ENCODE measurements at regions of chr5 and their contacts with region 1.

Region 1: DNA sequence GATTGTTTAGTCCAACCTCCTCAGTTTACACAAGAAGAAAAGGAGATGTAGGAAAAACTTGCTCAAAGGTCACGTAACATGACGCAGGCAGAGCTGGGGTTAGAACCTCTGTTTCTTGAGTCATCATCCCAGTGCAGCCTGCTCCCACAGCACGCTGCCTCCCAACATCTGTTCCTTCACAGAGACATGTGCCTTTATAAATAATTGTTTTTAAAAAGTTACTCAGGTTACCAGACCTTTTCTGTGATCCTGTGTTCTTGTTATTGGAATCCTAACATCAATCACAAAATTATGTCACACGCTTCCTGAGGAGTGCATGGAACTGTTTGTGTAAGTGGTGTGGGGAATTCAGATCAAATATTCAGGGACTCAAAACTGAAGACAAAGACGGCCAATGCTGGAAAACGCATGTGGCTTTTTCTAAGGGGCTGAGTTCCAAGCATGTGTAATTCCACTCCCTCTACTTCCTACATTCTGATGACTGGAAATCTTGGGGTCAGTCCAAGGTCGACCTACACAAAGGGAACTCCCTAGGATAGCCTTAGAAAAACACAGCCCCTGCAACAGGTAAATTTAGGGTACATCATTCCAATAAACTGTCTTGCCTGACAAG is 184.3 kb downstream of the TSSK1B start:
- DNase-seq: peak in 1 of 2 donors; percentile 73
- ATAC-seq: peak; percentile 53 to 84 (median 76)
- H3K4me3 ChIP-seq: no peak overlapping the region
- H3K27ac ChIP-seq: peak overlapping the region in 9 of 10 donors; percentile 53 to 83 (median 68)
- H3K4me1 ChIP-seq: peaks cover 15 to 83% (median 59%) of the 10 kb centered on the region in 9 donors
- H3K27me3 ChIP-seq: no peaks in the 10 kb centered on the region
- CTCF ChIP-seq: no peak

Region 2: GRCh38 chr5:112983363-112983762 is 267.1 kb before region 1 on chr5:
- intact Hi-C with region 1: loop called in 1 of 10 experiments (anchors 5 kb)
- DNase-seq: no peak
- ATAC-seq: no peak
- H3K4me3 ChIP-seq: no peak overlapping the region
- H3K27ac ChIP-seq: no peak overlapping the region
- H3K4me1 ChIP-seq: peaks cover 0 to 50% (median 36%) of the 10 kb centered on the region in 9 donors
- H3K27me3 ChIP-seq: no peaks in the 10 kb centered on the region
- CTCF ChIP-seq: no peak

Region 3: GRCh38 chr5:113357696-113358476 is 107.4 kb after region 1 on chr5:
- intact Hi-C with region 1: no loop called
- DNase-seq: no peak
- ATAC-seq: peak in 2 of 8 donors; percentile 35 to 65
- H3K4me3 ChIP-seq: no peak overlapping the region
- H3K27ac ChIP-seq: no peak overlapping the region
- H3K4me1 ChIP-seq: peaks cover 0 to 24% (median 13%) of the 10 kb centered on the region in 9 donors
- H3K27me3 ChIP-seq: no peaks in the 10 kb centered on the region
- CTCF ChIP-seq: no peak

Measured in heart right ventricle (tissue), 16 donors.